Psoas muscle (tissue), 8 donors: ENCODE measurements at regions of chr21 and their contacts with region 1.

Region 1: GRCh38 chr21:32257962-32258785 is 20.7 kb downstream of the MIS18A start:
- DNase-seq: peak; percentile 60 to 71
- ATAC-seq: peak; percentile 77 to 89 (median 78)
- H3K4me3 ChIP-seq: no peak overlapping the region
- H3K27ac ChIP-seq: no peak overlapping the region
- H3K4me1 ChIP-seq: no peaks in the 10 kb centered on the region
- H3K27me3 ChIP-seq: peaks cover 0 to 4% (median 0%) of the 10 kb centered on the region in 3 donors
- CTCF ChIP-seq: peak; percentile 70

Region 2: DNA sequence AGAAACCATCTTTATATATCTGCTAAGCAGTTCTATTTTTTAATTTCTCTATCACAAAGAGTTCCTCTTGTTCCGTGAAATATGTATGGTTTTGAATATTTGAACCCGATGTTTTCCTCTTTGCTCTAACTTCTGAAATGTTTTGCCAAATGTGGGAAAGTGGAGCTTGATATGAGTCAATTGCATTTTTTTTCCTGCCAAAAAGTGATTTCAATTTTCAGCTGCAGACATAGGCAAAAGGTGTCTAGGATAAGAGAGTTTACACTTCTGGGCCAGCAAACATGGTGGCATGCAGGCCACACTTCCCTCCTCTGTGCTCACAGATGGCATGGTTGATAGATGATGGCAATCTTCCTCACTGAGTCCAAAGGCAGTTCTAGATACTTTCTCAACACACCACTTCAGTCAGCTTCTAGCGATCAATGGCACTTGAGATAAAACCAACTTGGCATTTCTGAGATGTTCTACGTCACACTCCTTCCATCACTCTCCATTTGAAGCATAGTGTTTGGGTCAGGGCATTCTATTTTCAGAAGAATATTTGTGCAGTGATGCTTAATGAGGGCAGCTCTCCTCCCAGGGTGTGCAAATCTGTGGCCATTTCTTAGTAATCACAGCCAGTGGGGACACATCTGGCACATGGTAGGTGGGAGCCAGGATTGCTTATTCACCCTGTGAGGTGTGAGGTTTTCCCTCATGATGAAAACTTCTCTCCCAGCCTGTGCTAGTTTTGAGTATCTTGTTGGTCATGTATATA is 471.8 kb before region 1 on chr21:
- intact Hi-C with region 1: loop called in 1 of 2 experiments (anchors 5 kb)
- DNase-seq: no peak
- ATAC-seq: no peak
- H3K4me3 ChIP-seq: no peak overlapping the region
- H3K27ac ChIP-seq: no peak overlapping the region
- H3K4me1 ChIP-seq: no peaks in the 10 kb centered on the region
- H3K27me3 ChIP-seq: no peaks in the 10 kb centered on the region
- CTCF ChIP-seq: no peak

Region 3: GRCh38 chr21:31866077-31866511 is 392.1 kb before region 1 on chr21:
- intact Hi-C with region 1: loop called (anchors 2 to 5 kb)
- DNase-seq: peak; percentile 87 to 91
- ATAC-seq: peak; percentile 89 to 97 (median 94)
- H3K4me3 ChIP-seq: no peak overlapping the region
- H3K27ac ChIP-seq: no peak overlapping the region
- H3K4me1 ChIP-seq: peaks cover 4% of the 10 kb centered on the region
- H3K27me3 ChIP-seq: peaks cover 0 to 22% (median 2%) of the 10 kb centered on the region in 3 donors
- CTCF ChIP-seq: peak; percentile 86